ENCODE measurements at regions of chr20 and their contacts with region 1.

Region 1: DNA sequence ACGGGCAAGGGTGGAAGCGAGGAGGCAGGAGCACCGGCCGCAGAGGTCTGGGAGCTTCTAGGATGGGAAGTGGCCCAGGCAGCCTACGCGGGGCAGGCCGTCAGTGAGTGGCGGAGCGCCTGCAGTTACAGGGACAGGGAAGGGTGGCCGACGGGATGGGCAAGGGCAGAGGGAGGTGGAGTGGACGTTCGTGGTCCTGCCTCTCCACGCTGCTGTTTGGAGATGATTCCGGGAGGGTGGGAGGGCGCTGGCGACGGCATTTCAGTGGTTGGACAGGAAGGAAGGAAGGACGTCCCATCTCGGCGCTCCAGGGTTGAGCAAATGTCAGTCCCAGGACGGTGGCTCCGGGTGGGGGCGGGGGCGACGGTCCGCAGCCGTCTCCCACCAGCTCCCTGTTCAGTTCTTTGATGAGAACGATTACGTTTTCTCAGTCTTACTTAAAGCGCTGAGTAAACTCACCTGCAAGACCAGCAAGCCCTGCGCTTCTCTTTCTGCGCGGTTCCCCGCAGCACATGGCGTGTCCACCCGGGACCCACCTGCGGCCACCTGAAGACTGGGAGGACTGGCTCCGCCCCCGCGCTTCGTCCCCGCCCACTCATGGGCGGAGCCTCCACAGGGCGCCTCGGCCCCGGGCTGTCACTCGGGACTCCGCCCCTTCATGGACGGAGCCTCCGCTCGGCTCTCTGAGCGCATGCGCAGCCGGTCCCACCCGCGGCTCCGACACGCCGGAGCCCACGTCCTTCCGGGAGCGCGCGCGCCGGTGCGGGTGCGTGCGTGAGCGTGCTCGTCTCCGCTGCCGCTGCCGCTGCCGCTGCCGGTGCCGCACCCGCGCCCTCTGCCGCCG is at the start of gene DNAJC5:
- DNase-seq: peak; percentile 96 to 99 (median 97)
- ATAC-seq: peak; percentile 93 to 96 (median 95)
- H3K4me3 ChIP-seq: peak within 1 kb of the TSS; percentile 30 to 80 (median 68)
- H3K27ac ChIP-seq: peak within 1 kb of the TSS; percentile 42 to 96 (median 82)
- H3K4me1 ChIP-seq: peaks cover 9 to 50% (median 35%) of the 10 kb centered on the region in 12 donors
- H3K27me3 ChIP-seq: no peaks in the 10 kb centered on the region
- CTCF ChIP-seq: no peak
- POLR2A ChIP-seq: peak in 1 of 2 donors; percentile 52
- total RNA-seq, gene DNAJC5: 34.8 to 57.1 (median 46.1) TPM

Region 2: GRCh38 chr20:64062596-64063388 is 168.2 kb after region 1 on chr20 and contains the start of gene TCEA2:
- intact Hi-C with region 1: loop called in 1 of 10 experiments (anchors 10 kb)
- DNase-seq: peak; percentile 97 to 99 (median 98)
- ATAC-seq: peak; percentile 95 to 98 (median 95)
- H3K4me3 ChIP-seq: peak within 1 kb of the TSS; percentile 68 to 99 (median 92)
- H3K27ac ChIP-seq: peak within 1 kb of the TSS; percentile 59 to 89 (median 85)
- H3K4me1 ChIP-seq: peaks cover 6 to 48% (median 24%) of the 10 kb centered on the region in 12 donors
- H3K27me3 ChIP-seq: no peaks in the 10 kb centered on the region
- CTCF ChIP-seq: no peak
- POLR2A ChIP-seq: peak in 1 of 2 donors; percentile 90
- total RNA-seq, gene TCEA2: 19.2 to 52.1 (median 42.9) TPM

Region 3: DNA sequence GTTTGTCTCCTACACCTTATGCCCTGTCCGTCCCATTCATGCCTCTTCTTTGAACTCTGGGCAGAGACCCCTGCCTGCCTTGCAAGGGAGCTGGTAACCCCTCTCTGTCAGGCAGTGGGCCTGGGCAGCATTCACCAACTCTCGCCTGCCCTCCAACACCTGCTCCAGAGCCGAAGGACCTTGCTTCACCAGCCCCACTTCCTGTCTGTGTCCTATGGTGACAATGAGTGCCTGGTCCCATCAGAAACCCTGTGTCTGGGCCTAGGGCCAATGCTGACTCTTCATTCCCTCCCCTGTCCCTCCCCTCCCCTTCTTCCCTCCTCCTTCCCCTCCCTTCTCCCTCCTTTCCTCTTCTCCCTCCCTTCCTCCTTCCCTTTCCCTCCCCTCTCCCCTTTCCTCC is 338.2 kb after region 1 on chr20:
- intact Hi-C with region 1: no loop called
- DNase-seq: peak in 3 of 5 donors; percentile 51 to 74 (median 57)
- ATAC-seq: peak; percentile 35 to 59 (median 50)
- H3K4me3 ChIP-seq: no peak overlapping the region
- H3K27ac ChIP-seq: peak overlapping the region in 4 of 12 donors; percentile 17 to 54 (median 23)
- H3K4me1 ChIP-seq: peaks cover 0 to 19% (median 7%) of the 10 kb centered on the region in 12 donors
- H3K27me3 ChIP-seq: no peaks in the 10 kb centered on the region
- CTCF ChIP-seq: no peak
- POLR2A ChIP-seq: no peak

Measured in heart left ventricle (tissue), 16 donors.